ENCODE measurements at regions of chr10 and their contacts with region 1.

Region 1: DNA sequence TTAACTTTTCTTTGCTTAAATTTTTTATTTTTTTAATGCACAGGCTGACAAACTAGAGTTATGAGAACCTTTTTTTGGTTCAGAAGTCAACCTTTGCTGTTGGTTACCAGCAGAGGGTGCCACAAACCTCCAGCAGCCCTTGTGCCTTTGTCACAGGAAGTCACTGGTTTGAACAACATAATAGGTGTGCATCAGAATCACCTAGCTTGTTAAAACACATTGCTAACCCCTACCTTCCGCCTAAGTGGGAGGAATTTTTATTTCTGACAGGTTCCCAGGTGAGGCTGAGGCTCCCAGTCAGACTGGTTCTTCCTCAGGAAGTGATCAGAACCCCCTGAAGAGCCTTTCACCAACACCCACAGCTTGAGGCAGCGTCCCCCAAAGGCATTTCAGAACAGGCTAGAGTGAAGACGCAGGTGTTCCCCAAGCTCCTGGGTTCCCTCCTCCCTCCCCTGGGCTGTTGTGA is 22.6 kb upstream of the VDAC2 start:
- DNase-seq: peak; percentile 65 to 66
- H3K4me3 ChIP-seq: no peak overlapping the region
- H3K4me3 Mint-ChIP-seq: no peak overlapping the region
- H3K27ac Mint-ChIP-seq: no peak overlapping the region
- H3K4me1 ChIP-seq: peaks cover 34% of the 10 kb centered on the region
- H3K4me1 Mint-ChIP-seq: peaks cover 19% of the 10 kb centered on the region
- H3K27me3 ChIP-seq: no peaks in the 10 kb centered on the region
- H3K27me3 Mint-ChIP-seq: no peaks in the 10 kb centered on the region
- CTCF ChIP-seq: peak; percentile 71 to 85

Region 2: DNA sequence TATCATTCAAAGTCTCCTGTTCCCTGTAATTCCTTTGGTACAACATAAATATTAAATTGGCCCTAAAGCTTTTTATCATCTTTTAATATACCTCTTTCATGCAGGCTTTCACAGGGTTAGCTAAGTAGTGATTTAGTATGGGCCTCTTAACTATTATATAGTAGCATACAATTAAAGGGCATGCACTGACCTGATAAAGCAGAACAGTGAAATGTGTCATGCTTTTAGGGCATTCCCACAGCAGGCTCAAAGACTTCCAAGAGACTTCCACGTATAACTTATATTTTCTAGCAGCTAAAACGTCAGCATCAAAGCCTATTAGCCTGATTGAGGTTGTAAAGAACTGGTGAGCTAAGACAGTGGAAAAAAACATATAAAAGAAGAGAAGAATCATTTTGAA is 41.2 kb before region 1 on chr10:
- CTCF ChIA-PET with region 1: no interaction called
- POLR2A ChIA-PET with region 1: interaction called, 12 read pairs
- intact Hi-C with region 1: no loop called
- DNase-seq: no peak
- H3K4me3 ChIP-seq: no peak overlapping the region
- H3K4me3 Mint-ChIP-seq: no peak overlapping the region
- H3K27ac Mint-ChIP-seq: no peak overlapping the region
- H3K4me1 ChIP-seq: no peaks in the 10 kb centered on the region
- H3K4me1 Mint-ChIP-seq: peaks cover 23% of the 10 kb centered on the region
- H3K27me3 ChIP-seq: no peaks in the 10 kb centered on the region
- H3K27me3 Mint-ChIP-seq: no peaks in the 10 kb centered on the region
- CTCF ChIP-seq: no peak

Region 3: DNA sequence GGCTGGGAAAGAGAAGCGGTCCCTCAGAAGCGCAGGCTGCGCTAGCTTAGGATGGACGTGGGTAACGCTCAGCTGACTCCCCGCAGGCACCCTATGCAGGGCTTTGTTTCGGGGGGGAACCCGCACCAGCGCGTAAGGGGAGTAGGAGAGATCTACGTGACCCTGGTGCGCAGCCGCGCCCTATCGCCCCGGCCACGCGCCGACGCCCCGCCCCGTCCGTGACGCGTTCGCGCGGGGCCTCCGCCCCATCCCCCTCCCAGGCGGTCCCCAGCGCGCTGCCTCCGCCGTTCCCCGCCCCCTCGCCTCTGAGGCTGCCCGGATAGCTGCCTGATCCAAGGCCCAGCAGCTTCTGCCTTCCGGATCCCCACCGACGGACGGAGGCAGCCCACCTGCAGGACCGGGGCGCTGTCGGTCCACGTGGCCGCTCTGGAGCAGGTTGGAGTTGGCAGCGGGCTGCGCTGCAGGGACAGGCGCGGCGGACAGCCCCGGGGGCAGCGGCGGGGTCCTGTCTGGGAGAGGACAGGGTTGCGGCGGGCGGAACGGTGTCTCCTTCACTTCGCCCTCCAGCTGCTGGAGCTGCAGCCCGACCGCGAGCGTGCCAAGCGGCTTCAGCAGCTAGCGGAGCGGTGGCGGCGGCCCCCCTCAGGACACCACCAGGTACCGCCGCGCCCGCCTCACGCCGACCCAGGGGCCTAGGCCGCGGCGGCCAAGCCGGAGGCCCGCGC is 22.4 kb after region 1 on chr10 and contains the start of gene VDAC2:
- CTCF ChIA-PET with region 1: interaction called, 27 read pairs
- POLR2A ChIA-PET with region 1: interaction called, 12 read pairs
- intact Hi-C with region 1: loop called (anchors 1 kb)
- DNase-seq: peak; percentile 93 to 96
- H3K4me3 ChIP-seq: peak within 1 kb of the TSS; percentile 75
- H3K4me3 Mint-ChIP-seq: peak within 1 kb of the TSS; percentile 100
- H3K27ac Mint-ChIP-seq: peak within 1 kb of the TSS; percentile 100
- H3K4me1 ChIP-seq: peaks cover 28% of the 10 kb centered on the region
- H3K4me1 Mint-ChIP-seq: peaks cover 5% of the 10 kb centered on the region
- H3K27me3 ChIP-seq: no peaks in the 10 kb centered on the region
- H3K27me3 Mint-ChIP-seq: no peaks in the 10 kb centered on the region
- CTCF ChIP-seq: peak in 1 of 2 experiments; percentile 8
- total RNA-seq, gene VDAC2: 244 and 250 TPM in 2 replicates

Region 4: GRCh38 chr10:75226656-75227055 is 38.7 kb after region 1 on chr10:
- CTCF ChIA-PET with region 1: interaction called, 27 read pairs
- POLR2A ChIA-PET with region 1: interaction called, 11 read pairs
- intact Hi-C with region 1: loop called (anchors 1 kb)
- DNase-seq: peak in 1 of 2 experiments; percentile 14
- H3K4me3 ChIP-seq: no peak overlapping the region
- H3K4me3 Mint-ChIP-seq: peak overlapping the region; percentile 53
- H3K27ac Mint-ChIP-seq: peak overlapping the region; percentile 88
- H3K4me1 ChIP-seq: peaks cover 66% of the 10 kb centered on the region
- H3K4me1 Mint-ChIP-seq: peaks cover 65% of the 10 kb centered on the region
- H3K27me3 ChIP-seq: no peaks in the 10 kb centered on the region
- H3K27me3 Mint-ChIP-seq: no peaks in the 10 kb centered on the region
- CTCF ChIP-seq: no peak

Region 5: DNA sequence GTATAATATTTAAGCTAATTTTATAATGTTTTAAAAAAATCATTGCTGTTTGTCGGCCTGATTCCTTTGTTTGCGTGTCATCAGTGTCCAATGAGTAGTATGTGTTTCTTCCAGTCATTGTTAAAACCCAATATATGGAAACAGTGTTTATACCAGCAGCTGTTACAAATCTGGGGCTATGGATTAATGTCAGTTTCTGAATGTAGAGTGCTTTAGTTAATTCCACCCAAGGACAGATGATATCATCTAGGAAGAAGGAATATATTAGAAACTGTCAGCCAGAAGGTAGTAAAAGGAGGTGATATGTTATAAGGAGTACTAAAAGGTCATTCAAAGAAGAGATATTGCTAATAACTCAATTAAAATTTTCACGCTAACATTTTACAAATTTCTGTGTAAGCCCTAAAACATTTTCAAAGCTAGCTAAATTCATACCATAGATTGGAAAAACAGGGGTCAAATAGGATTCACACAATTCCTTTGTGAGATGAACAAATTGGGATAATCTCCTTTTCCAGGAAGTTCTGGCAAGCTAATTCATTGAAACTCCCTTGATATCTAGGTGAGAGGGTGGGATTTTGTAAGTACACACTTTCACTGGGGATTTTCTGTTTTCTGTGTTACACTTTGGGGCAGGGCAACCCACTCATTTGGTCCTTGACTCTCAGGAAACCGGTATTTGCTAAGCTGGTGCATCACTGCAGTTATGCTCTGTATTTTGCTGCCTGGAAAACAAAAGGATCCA is 692.2 kb after region 1 on chr10:
- CTCF ChIA-PET with region 1: no interaction called
- POLR2A ChIA-PET with region 1: no interaction called
- intact Hi-C with region 1: no loop called
- DNase-seq: no peak
- H3K4me3 ChIP-seq: no peak overlapping the region
- H3K4me3 Mint-ChIP-seq: no peak overlapping the region
- H3K27ac Mint-ChIP-seq: no peak overlapping the region
- H3K4me1 ChIP-seq: no peaks in the 10 kb centered on the region
- H3K4me1 Mint-ChIP-seq: no peaks in the 10 kb centered on the region
- H3K27me3 ChIP-seq: no peaks in the 10 kb centered on the region
- H3K27me3 Mint-ChIP-seq: no peaks in the 10 kb centered on the region
- CTCF ChIP-seq: no peak